ENCODE measurements at regions of chr3 and their contacts with region 1.

Region 1: DNA sequence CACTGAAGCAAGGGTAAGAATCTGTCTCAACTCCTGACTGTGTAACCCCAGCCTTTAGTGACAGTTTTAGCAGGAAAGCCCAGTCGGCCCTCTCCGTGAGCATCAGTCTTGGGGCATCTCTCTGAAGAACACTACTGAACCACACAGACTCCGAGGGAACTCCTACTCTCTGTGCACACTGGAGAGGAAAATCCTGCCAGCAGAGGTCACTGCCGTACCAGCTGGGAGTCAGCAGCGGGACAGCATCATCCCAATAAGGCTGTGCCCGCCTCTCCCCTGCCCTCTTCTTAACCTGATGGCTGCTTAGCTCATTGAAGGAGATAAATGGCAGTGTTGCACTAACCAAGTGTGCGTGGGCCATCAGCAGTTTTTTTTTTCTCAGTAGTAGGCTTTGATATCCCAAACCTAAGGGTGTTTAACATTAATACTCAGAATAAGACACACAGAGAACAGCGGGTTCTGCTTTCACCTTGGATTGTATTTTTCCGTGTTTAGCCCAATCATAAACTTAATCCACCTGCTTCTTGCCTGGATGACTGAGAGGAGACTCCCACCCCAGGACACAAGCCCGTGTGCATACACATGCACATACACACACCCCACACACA is 26.6 kb upstream of the RASA2 start:
- DNase-seq: peak; percentile 93
- H3K4me3 ChIP-seq: no peak overlapping the region
- H3K27ac ChIP-seq: no peak overlapping the region
- H3K4me1 ChIP-seq: peaks cover 0 to 7% (median 5%) of the 10 kb centered on the region in 4 donors
- H3K27me3 ChIP-seq: no peaks in the 10 kb centered on the region
- CTCF ChIP-seq: peak; percentile 83 to 89 (median 86)
- EP300 ChIP-seq: no peak
- POLR2A ChIP-seq: no peak

Region 2: GRCh38 chr3:141913150-141913811 is 453.1 kb after region 1 on chr3:
- intact Hi-C with region 1: loop called (anchors 10 kb)
- DNase-seq: no peak
- H3K4me3 ChIP-seq: no peak overlapping the region
- H3K27ac ChIP-seq: no peak overlapping the region
- H3K4me1 ChIP-seq: no peaks in the 10 kb centered on the region
- H3K27me3 ChIP-seq: no peaks in the 10 kb centered on the region
- CTCF ChIP-seq: peak; percentile 5 to 59 (median 51)
- EP300 ChIP-seq: no peak
- POLR2A ChIP-seq: no peak